ENCODE measurements at regions of chr18 and their contacts with region 1.

Region 1: GRCh38 chr18:2571200-2572143 is at the starts of genes METTL4 and NDC80:
- DNase-seq: peak; percentile 87
- H3K4me3 Mint-ChIP-seq: peak within 1 kb of the TSS; percentile 95
- H3K27ac Mint-ChIP-seq: peak within 1 kb of the TSS; percentile 96
- H3K4me1 Mint-ChIP-seq: peaks cover 55% of the 10 kb centered on the region
- H3K27me3 Mint-ChIP-seq: no peaks in the 10 kb centered on the region
- total RNA-seq, gene METTL4: 22.1 to 23.7 TPM
- total RNA-seq, gene NDC80: 78.0 to 78.9 TPM

Region 2: DNA sequence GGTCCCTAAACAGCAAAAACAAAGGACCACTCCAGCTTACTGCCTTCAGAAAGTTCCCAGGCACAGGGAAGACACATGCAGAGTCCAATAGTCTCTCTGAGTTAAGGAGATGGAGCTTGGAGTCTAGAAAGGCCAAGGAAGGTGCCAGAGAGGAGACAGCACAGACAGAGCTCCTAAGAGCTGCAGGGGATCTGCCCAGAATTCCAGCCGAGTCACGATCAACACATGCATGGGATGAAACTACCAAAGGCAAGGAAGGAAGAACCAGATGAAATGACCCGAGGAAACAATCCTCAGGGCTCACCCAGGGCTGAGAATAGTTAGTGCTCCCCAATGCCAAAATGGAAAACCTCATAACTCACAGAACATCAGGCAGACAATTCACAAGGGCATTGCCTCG is 15.6 kb before region 1 on chr18:
- CTCF ChIA-PET with region 1: no interaction called
- POLR2A ChIA-PET with region 1: no interaction called
- DNase-seq: no peak
- H3K4me3 Mint-ChIP-seq: no peak overlapping the region
- H3K27ac Mint-ChIP-seq: no peak overlapping the region
- H3K4me1 Mint-ChIP-seq: no peaks in the 10 kb centered on the region
- H3K27me3 Mint-ChIP-seq: no peaks in the 10 kb centered on the region

Region 3: GRCh38 chr18:2589345-2590068 is 18.0 kb after region 1 on chr18:
- CTCF ChIA-PET with region 1: interaction called, 4 read pairs
- POLR2A ChIA-PET with region 1: interaction called, 35 read pairs
- DNase-seq: no peak
- H3K4me3 Mint-ChIP-seq: no peak overlapping the region
- H3K27ac Mint-ChIP-seq: peak overlapping the region; percentile 71
- H3K4me1 Mint-ChIP-seq: peaks cover 45% of the 10 kb centered on the region
- H3K27me3 Mint-ChIP-seq: no peaks in the 10 kb centered on the region